ENCODE measurements at regions of chr3 and their contacts with region 1.

Region 1: DNA sequence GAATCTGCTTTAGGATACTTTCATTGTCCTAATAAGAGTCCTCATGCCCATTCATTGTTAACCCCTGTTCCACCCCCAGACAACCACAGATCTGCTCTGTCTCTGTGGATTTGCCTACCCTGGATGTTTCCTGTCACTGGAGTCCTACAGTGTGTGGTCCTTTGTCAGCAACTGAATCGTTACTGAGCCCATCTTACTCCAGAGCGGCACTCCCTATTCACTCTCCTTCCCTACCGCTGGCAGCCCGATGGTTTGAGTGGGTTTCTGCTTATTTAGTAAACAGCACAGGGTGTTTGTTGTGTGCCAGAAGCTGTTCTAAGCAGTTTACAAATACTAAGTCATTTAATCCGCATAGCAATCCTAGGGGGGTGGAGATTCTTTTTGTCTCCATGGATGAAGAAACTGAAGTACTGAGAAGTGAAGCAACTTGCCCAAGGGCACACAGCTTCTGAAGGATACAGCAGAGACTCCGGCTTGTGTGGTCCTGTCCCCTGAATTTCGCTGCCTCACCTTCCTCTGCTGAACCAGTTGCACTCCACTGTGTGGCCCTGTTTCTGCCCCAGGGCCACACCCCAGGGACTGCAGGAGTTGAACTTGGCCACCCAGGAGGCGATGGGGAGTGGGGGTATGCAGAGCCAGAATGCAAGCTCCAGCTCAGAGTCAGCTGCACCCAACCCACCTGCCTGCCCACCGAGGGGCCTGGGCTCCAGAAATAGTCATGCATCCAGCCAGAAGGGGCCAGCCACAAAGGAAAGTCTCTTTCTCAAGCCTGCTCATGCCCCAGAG is 56.5 kb upstream of the SLC6A1 start:
- DNase-seq: no peak
- ATAC-seq: no peak
- H3K4me3 ChIP-seq: no peak overlapping the region
- H3K4me3 Mint-ChIP-seq: no peak overlapping the region
- H3K27ac ChIP-seq: no peak overlapping the region
- H3K27ac Mint-ChIP-seq: no peak overlapping the region
- H3K4me1 ChIP-seq: no peaks in the 10 kb centered on the region
- H3K4me1 Mint-ChIP-seq: no peaks in the 10 kb centered on the region
- H3K27me3 ChIP-seq: no peaks in the 10 kb centered on the region
- H3K27me3 Mint-ChIP-seq: peaks cover 4% of the 10 kb centered on the region
- CTCF ChIP-seq: no peak

Region 2: GRCh38 chr3:11085093-11085840 is 149.2 kb after region 1 on chr3:
- CTCF ChIA-PET with region 1: no interaction called
- POLR2A ChIA-PET with region 1: no interaction called
- intact Hi-C with region 1: loop called in 1 of 2 experiments (anchors 5 kb)
- DNase-seq: no peak
- ATAC-seq: no peak
- H3K4me3 ChIP-seq: no peak overlapping the region
- H3K4me3 Mint-ChIP-seq: no peak overlapping the region
- H3K27ac ChIP-seq: no peak overlapping the region
- H3K27ac Mint-ChIP-seq: no peak overlapping the region
- H3K4me1 ChIP-seq: no peaks in the 10 kb centered on the region
- H3K4me1 Mint-ChIP-seq: no peaks in the 10 kb centered on the region
- H3K27me3 ChIP-seq: no peaks in the 10 kb centered on the region
- H3K27me3 Mint-ChIP-seq: peaks cover 4% of the 10 kb centered on the region
- CTCF ChIP-seq: no peak